ENCODE measurements at regions of chr1 and their contacts with region 1.

Region 1: GRCh38 chr1:60969971-60970509 is 112.3 kb upstream of the NFIA start:
- DNase-seq: peak in 1 of 10 donors; percentile 4
- H3K4me3 ChIP-seq: peak overlapping the region in 38 of 59 donors; percentile 4 to 57 (median 24)
- H3K27ac ChIP-seq: peak overlapping the region in 53 of 59 donors; percentile 7 to 90 (median 72)
- H3K27me3 ChIP-seq: no peaks in the 10 kb centered on the region
- CTCF ChIP-seq: peak; percentile 27 to 86 (median 66)

Region 2: GRCh38 chr1:60535713-60536112 is 434.3 kb before region 1 on chr1:
- intact Hi-C with region 1: no loop called
- DNase-seq: no peak
- H3K4me3 ChIP-seq: no peak overlapping the region
- H3K27ac ChIP-seq: no peak overlapping the region
- H3K27me3 ChIP-seq: peaks cover 0 to 3% (median 0%) of the 10 kb centered on the region in 45 donors
- CTCF ChIP-seq: no peak

Region 3: GRCh38 chr1:61043010-61043820 is 73.2 kb after region 1 on chr1:
- intact Hi-C with region 1: loop called (anchors 1 to 5 kb)
- DNase-seq: peak; percentile 71 to 86 (median 80)
- H3K4me3 ChIP-seq: peak overlapping the region; percentile 36 to 74 (median 58)
- H3K27ac ChIP-seq: peak overlapping the region in 46 of 59 donors; percentile 3 to 90 (median 64)
- H3K27me3 ChIP-seq: peaks cover 0 to 7% (median 0%) of the 10 kb centered on the region in 45 donors
- CTCF ChIP-seq: peak; percentile 66 to 96 (median 89)

Region 4: DNA sequence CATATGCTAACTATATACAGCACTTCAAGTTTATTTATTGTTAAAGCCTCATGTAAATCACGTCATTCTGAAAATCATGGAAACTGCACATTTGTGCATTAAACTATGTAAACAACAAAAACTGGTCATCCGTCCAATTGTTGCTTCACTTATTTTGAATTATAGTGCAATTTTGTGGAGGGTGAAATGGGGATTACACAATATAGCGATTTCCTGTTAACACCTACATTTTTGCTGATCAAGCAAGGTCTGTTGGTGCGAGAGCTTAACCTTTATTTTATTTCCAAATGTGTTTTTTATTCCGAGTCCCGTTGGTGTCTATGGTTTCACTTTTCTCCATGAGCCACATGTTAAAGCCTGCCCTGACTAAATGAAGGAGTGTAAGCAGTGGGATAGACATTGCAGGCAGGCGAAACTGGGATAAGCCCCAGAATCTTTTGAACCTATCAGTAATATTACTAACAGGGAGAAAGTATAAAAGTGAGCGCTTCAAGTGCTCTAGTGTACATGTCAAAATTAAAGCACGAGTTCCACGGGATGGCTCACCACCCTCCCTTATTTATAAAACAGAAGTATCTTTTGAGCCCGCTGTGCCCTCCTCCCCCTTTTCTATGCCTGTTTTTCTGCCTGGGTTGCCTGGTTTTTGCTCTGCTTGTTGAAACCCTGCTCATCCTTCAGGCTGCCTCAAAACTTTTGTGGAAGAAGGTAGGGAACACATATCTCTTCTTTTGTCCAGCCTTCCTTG is 233.0 kb after region 1 on chr1:
- intact Hi-C with region 1: no loop called
- DNase-seq: no peak
- H3K4me3 ChIP-seq: peak overlapping the region in 47 of 59 donors; percentile 3 to 56 (median 30)
- H3K27ac ChIP-seq: peak overlapping the region in 26 of 59 donors; percentile 1 to 66 (median 34)
- H3K27me3 ChIP-seq: no peaks in the 10 kb centered on the region
- CTCF ChIP-seq: no peak

Region 5: GRCh38 chr1:61453111-61453961 is 483.3 kb after region 1 on chr1:
- intact Hi-C with region 1: loop called (anchors 5 kb)
- DNase-seq: peak; percentile 67 to 90 (median 80)
- H3K4me3 ChIP-seq: peak overlapping the region in 11 of 59 donors; percentile 6 to 29 (median 13)
- H3K27ac ChIP-seq: peak overlapping the region in 58 of 59 donors; percentile 0 to 83 (median 68)
- H3K27me3 ChIP-seq: no peaks in the 10 kb centered on the region
- CTCF ChIP-seq: peak; percentile 23 to 87 (median 76)

Region 6: GRCh38 chr1:61641578-61642336 is 671.7 kb after region 1 on chr1:
- intact Hi-C with region 1: loop called in 1 of 2 experiments (anchors 5 kb)
- DNase-seq: peak; percentile 54 to 84 (median 72)
- H3K4me3 ChIP-seq: peak overlapping the region in 50 of 59 donors; percentile 1 to 55 (median 32)
- H3K27ac ChIP-seq: peak overlapping the region in 42 of 59 donors; percentile 3 to 81 (median 51)
- H3K27me3 ChIP-seq: no peaks in the 10 kb centered on the region
- CTCF ChIP-seq: peak; percentile 39 to 87 (median 76)

Region 7: DNA sequence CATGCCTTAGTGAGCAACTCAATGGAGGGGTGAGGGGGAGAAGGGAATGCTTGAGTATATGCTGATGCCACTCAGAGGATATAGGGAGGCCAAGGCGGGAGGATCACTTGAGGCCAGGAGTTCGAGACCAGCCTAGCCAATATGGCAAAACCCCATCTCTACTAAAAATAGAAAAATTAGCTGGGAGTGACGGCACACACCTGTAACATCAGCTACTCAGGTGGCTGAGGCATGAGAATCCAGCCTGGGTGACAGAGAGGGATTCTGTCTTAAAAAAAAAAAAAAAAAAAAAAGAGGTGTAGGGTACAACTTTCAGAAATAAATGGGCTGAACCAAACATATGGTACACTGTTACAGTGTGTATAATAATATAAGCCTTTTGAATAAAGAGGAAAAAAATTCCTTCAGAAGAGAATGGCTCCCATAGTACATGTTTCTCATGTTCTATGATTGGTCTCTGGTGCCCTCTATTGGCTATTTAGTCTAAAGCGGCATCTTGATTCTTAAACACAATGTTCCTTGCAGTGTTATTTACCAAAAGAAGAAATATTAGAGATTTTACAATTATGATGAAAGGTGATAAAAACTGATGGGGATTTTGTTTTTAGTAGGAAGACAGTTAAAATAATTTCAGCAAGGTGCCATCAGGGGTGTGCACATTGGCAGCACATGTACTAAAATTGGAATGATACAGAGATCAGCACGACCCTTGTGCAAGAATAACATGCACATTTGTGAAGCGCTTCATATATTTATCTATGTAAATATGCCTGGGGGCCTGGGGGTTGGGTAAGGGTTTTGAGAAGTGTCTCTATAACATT is 882.0 kb after region 1 on chr1:
- intact Hi-C with region 1: loop called (anchors 2 to 5 kb)
- DNase-seq: no peak
- H3K4me3 ChIP-seq: no peak overlapping the region
- H3K27ac ChIP-seq: peak overlapping the region in 23 of 59 donors; percentile 3 to 69 (median 38)
- H3K27me3 ChIP-seq: no peaks in the 10 kb centered on the region
- CTCF ChIP-seq: peak; percentile 51 to 90 (median 74)

Region 8: GRCh38 chr1:61921435-61921834 is 951.4 kb after region 1 on chr1:
- intact Hi-C with region 1: no loop called
- DNase-seq: no peak
- H3K4me3 ChIP-seq: no peak overlapping the region
- H3K27ac ChIP-seq: no peak overlapping the region
- H3K27me3 ChIP-seq: no peaks in the 10 kb centered on the region
- CTCF ChIP-seq: peak in 6 of 56 donors; percentile 12 to 32 (median 17)